Stomach (tissue), 19 donors: ENCODE measurements at regions of chr10 and their contacts with region 1.

Region 1: GRCh38 chr10:43648398-43649184 is at the start of gene ZNF32:
- DNase-seq: peak; percentile 85 to 96
- H3K4me3 ChIP-seq: peak within 1 kb of the TSS; percentile 63 to 90 (median 78)
- H3K27ac ChIP-seq: peak within 1 kb of the TSS; percentile 58 to 89 (median 83)
- H3K4me1 ChIP-seq: peaks cover 0 to 21% (median 11%) of the 10 kb centered on the region in 4 donors
- H3K27me3 ChIP-seq: no peaks in the 10 kb centered on the region
- CTCF ChIP-seq: no peak
- EP300 ChIP-seq: no peak
- POLR2A ChIP-seq: no peak
- total RNA-seq, gene ZNF32: 8.7 to 75.9 (median 34.5) TPM

Region 2: GRCh38 chr10:43574001-43574892 is 74.3 kb before region 1 on chr10 and contains the start of gene ZNF239:
- intact Hi-C with region 1: loop called (anchors 10 kb)
- DNase-seq: peak; percentile 87 to 97
- H3K4me3 ChIP-seq: peak within 1 kb of the TSS; percentile 59 to 84 (median 68)
- H3K27ac ChIP-seq: peak within 1 kb of the TSS; percentile 59 to 82 (median 81)
- H3K4me1 ChIP-seq: peaks cover 0 to 24% (median 23%) of the 10 kb centered on the region in 4 donors
- H3K27me3 ChIP-seq: no peaks in the 10 kb centered on the region
- CTCF ChIP-seq: no peak
- EP300 ChIP-seq: no peak
- POLR2A ChIP-seq: no peak
- total RNA-seq, gene ZNF239: 4.0 to 37.5 (median 5.2) TPM in 3 of 5 donors, not detected in the others